MCF 10A (cell line): ENCODE measurements at regions of chr7 and their contacts with region 1.

Region 1: DNA sequence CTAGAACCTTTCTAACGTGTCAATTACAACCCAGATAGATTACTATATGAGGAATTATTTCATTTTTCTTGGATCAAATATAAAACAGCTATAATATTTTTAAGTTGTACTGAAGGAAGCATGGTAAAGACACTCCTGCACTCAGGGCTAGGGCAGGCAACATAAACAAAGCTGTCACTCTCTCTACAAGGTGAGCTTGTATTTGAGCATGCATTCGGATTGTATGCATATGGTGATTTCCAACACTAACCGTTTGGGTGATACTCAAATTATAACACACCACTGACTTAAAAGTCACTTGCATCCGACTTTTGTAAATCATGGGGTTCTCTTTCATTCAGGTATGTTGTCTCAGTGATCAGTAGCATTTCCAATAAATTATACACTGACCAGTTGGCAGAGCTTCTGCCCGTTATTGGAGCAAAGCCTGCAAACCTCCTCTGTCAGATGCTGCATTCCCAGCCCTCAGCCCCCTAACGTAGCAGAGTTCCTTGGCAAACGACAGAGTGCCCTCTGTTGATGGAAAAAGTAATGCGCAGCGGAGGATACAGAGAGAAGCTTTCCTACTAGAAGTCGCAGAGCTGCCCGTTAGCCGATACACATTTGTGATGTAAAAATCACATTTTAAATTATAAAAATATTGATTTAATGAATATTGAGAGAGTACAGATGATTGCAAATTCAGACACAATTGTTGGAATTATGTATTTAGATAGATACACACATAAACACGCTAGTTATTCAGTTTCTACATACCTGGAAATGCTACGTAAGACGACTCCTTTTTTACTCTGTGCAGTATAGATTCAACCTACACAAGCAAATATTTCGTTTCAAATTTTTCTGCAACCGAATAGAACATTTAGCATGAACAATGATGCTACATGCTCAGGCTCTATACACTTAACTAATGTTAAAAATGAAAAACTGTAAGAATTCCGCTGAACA is 173.9 kb upstream of the SP4 start:
- DNase-seq: peak; percentile 69
- H3K4me3 Mint-ChIP-seq: no peak overlapping the region
- H3K27ac Mint-ChIP-seq: no peak overlapping the region
- H3K4me1 Mint-ChIP-seq: no peaks in the 10 kb centered on the region
- H3K27me3 Mint-ChIP-seq: peaks cover 10% of the 10 kb centered on the region
- CTCF ChIP-seq: peak; percentile 58

Region 2: GRCh38 chr7:20834656-20835055 is 419.4 kb before region 1 on chr7:
- CTCF ChIA-PET with region 1: interaction called, 3 read pairs
- POLR2A ChIA-PET with region 1: no interaction called
- intact Hi-C with region 1: loop called (anchors 10 kb)
- DNase-seq: peak; percentile 22
- H3K4me3 Mint-ChIP-seq: no peak overlapping the region
- H3K27ac Mint-ChIP-seq: no peak overlapping the region
- H3K4me1 Mint-ChIP-seq: no peaks in the 10 kb centered on the region
- H3K27me3 Mint-ChIP-seq: no peaks in the 10 kb centered on the region
- CTCF ChIP-seq: peak; percentile 36

Region 3: DNA sequence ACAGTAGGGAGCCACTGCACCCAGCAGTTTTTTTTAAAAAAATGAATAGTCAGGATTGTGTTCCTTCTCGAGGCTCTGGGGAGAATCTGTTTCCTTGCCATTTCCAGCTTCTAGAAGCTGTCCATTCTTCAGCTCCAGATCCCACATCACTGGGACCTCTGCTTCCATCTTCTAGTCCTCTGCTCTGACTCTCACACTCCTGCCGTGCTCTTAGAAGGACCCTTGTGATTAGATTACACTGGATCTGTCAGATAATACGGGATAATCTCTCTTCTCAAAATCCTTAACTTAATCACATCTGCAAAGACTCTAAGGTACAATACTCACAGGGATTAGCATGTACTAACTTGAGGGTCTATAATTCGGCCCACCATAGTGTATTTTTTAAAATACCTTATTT is 15.0 kb after region 1 on chr7:
- CTCF ChIA-PET with region 1: interaction called, 11 read pairs
- POLR2A ChIA-PET with region 1: no interaction called
- intact Hi-C with region 1: no loop called
- DNase-seq: no peak
- H3K4me3 Mint-ChIP-seq: no peak overlapping the region
- H3K27ac Mint-ChIP-seq: no peak overlapping the region
- H3K4me1 Mint-ChIP-seq: no peaks in the 10 kb centered on the region
- H3K27me3 Mint-ChIP-seq: no peaks in the 10 kb centered on the region
- CTCF ChIP-seq: no peak

Region 4: DNA sequence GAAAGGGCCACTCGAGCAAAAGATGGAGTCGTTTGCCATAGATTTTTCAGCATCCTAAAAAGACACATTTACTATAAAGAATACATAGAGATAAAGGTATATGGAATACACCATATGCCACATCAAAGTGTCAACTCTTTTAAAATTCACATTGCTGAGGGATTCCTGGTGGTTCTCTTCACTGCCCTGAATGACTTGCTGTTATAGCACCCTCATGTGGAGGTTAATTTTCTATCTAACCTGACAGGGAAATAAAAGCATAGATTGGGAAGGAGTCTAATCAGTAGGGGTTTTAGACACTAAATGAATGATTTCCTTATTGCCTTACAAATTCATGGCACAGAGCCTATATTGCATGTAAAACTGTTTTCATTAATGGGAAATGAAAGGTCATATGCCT is 314.7 kb after region 1 on chr7:
- CTCF ChIA-PET with region 1: no interaction called
- POLR2A ChIA-PET with region 1: no interaction called
- intact Hi-C with region 1: loop called (anchors 2 kb)
- DNase-seq: peak; percentile 36
- H3K4me3 Mint-ChIP-seq: no peak overlapping the region
- H3K27ac Mint-ChIP-seq: peak overlapping the region; percentile 42
- H3K4me1 Mint-ChIP-seq: no peaks in the 10 kb centered on the region
- H3K27me3 Mint-ChIP-seq: no peaks in the 10 kb centered on the region
- CTCF ChIP-seq: peak; percentile 18

Region 5: GRCh38 chr7:22001345-22002004 is 747.5 kb after region 1 on chr7:
- CTCF ChIA-PET with region 1: interaction called, 10 read pairs
- POLR2A ChIA-PET with region 1: no interaction called
- intact Hi-C with region 1: loop called (anchors 1 kb)
- DNase-seq: peak; percentile 73
- H3K4me3 Mint-ChIP-seq: peak overlapping the region; percentile 37
- H3K27ac Mint-ChIP-seq: no peak overlapping the region
- H3K4me1 Mint-ChIP-seq: peaks cover 4% of the 10 kb centered on the region
- H3K27me3 Mint-ChIP-seq: no peaks in the 10 kb centered on the region
- CTCF ChIP-seq: peak; percentile 64